SK-N-SH (cell line): ENCODE measurements at regions of chr5 and their contacts with region 1.

Region 1: GRCh38 chr5:139968547-139969261 is 74.4 kb downstream of the NRG2 start:
- DNase-seq: peak; percentile 91
- H3K4me3 ChIP-seq: peak overlapping the region in 1 of 2 experiments; percentile 28; a peak in 1 of 4 replicates
- H3K27ac ChIP-seq: no peak overlapping the region
- H3K4me1 ChIP-seq: peaks cover 0 to 16% of the 10 kb centered on the region in 2 experiments; a peak in 1 of 4 replicates
- H3K27me3 ChIP-seq: no peaks in the 10 kb centered on the region
- CTCF ChIP-seq: peak; percentile 97
- EP300 ChIP-seq: no peak
- RAD21 ChIP-seq: peak; percentile 99

Region 2: DNA sequence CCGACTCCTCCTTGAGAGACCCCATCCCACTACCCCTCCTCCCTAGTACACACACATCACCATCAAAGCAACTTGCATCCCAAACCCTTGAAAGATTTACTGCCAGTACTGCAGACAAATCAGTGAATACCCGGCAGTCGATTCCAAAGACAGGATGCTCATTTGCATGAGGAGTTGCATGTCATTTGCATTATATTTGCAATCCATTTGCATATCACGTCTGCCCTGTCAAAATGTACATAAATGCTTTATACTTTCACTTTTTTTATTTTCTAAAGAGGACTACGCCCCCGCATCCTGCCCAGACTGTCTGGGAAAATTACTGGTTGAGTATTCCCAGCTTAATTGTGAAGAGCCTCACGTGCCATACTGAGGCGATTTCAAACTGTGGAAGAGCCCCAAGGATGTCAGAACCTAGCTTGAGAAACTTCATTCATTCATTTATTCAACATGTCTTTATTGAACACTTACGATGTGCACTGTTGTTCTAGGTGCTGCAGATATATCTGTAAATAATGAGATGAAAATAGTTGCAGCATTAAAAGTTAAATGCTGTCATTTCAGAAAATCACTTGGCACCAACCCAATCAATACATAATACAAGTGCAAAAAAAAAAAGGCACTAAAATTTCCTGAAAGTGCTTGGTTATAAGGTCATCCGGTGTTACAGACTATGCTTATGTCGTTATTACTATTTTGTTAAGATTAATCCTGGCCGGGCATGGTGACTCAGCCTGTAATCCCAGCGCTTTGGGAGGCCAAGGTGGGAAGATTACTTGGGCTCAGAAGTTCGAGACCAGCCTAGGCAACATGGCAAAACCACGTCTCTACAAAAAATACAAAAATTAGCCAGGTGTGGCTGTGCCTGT is 753.4 kb before region 1 on chr5:
- CTCF ChIA-PET with region 1: no interaction called
- POLR2A ChIA-PET with region 1: no interaction called
- DNase-seq: no peak
- H3K4me3 ChIP-seq: no peak overlapping the region
- H3K27ac ChIP-seq: no peak overlapping the region
- H3K4me1 ChIP-seq: no peaks in the 10 kb centered on the region; a peak in 1 of 4 replicates
- H3K27me3 ChIP-seq: no peaks in the 10 kb centered on the region
- CTCF ChIP-seq: no peak
- EP300 ChIP-seq: no peak
- RAD21 ChIP-seq: no peak

Region 3: DNA sequence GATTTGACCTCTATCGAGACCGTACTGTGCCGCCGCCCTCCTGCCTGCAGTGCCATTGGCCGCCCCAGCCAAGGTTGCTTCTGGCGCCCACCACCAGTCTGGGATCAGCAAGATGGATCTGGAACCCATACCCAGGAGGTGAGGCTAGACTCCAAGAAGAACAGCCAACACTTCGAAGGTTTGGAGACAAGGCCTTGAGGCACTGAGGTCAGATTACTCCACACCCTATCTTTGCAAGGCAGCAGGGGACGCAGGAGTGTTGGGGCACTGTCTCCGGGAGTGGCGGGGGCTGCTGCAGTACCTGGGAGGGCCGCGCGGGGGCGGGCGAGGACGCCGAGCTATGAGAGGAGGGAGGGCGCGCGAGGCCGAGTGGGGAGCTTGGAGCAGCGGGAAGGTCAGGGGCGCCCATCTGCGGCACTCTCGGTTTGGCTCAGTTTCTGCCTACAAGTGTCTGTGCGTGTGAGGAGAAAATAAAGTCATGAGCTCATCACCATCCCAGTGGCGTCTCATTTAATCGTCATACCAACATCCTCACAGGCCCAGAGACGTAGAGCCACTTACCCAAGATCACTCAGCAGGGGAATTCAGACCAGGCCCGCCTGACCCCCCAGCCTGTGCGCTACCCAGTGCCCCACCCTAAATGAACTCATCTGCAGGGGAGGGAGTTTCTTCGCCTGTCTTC is 193.6 kb before region 1 on chr5:
- CTCF ChIA-PET with region 1: interaction called, 96 read pairs
- POLR2A ChIA-PET with region 1: interaction called, 3 read pairs
- DNase-seq: peak; percentile 94
- H3K4me3 ChIP-seq: peak overlapping the region in 1 of 2 experiments; percentile 4; a peak in 1 of 4 replicates
- H3K27ac ChIP-seq: no peak overlapping the region
- H3K4me1 ChIP-seq: peaks cover 0 to 2% of the 10 kb centered on the region in 2 experiments; a peak in 1 of 4 replicates
- H3K27me3 ChIP-seq: no peaks in the 10 kb centered on the region; the same call in 1 of the 2 replicates
- CTCF ChIP-seq: peak; percentile 86
- EP300 ChIP-seq: no peak
- RAD21 ChIP-seq: peak; percentile 53

Region 4: GRCh38 chr5:139844472-139845145 is 124.1 kb before region 1 on chr5:
- CTCF ChIA-PET with region 1: interaction called, 67 read pairs
- POLR2A ChIA-PET with region 1: interaction called, 3 read pairs
- DNase-seq: peak; percentile 81
- H3K4me3 ChIP-seq: no peak overlapping the region; a peak in 1 of 4 replicates
- H3K27ac ChIP-seq: no peak overlapping the region
- H3K4me1 ChIP-seq: peaks cover 0 to 2% of the 10 kb centered on the region in 2 experiments; a peak in 1 of 4 replicates
- H3K27me3 ChIP-seq: no peaks in the 10 kb centered on the region
- CTCF ChIP-seq: peak; percentile 84
- EP300 ChIP-seq: no peak
- RAD21 ChIP-seq: peak; percentile 74

Region 5: GRCh38 chr5:139895647-139896046 is 73.1 kb before region 1 on chr5:
- CTCF ChIA-PET with region 1: interaction called, 79 read pairs
- POLR2A ChIA-PET with region 1: no interaction called
- DNase-seq: no peak
- H3K4me3 ChIP-seq: no peak overlapping the region
- H3K27ac ChIP-seq: peak overlapping the region in 1 of 2 experiments; percentile 97; a peak in 2 of 4 replicates
- H3K4me1 ChIP-seq: peaks cover 0 to 65% of the 10 kb centered on the region in 2 experiments; a peak in 2 of 4 replicates
- H3K27me3 ChIP-seq: no peaks in the 10 kb centered on the region
- CTCF ChIP-seq: no peak
- EP300 ChIP-seq: peak in 1 of 2 experiments; percentile 38; a peak in 1 of 4 replicates
- RAD21 ChIP-seq: no peak

Region 6: GRCh38 chr5:139949710-139950109 is 19.0 kb before region 1 on chr5:
- CTCF ChIA-PET with region 1: interaction called, 73 read pairs
- POLR2A ChIA-PET with region 1: no interaction called
- DNase-seq: no peak
- H3K4me3 ChIP-seq: no peak overlapping the region
- H3K27ac ChIP-seq: no peak overlapping the region
- H3K4me1 ChIP-seq: peaks cover 0 to 24% of the 10 kb centered on the region in 2 experiments; a peak in 1 of 4 replicates
- H3K27me3 ChIP-seq: no peaks in the 10 kb centered on the region
- CTCF ChIP-seq: no peak
- EP300 ChIP-seq: no peak
- RAD21 ChIP-seq: no peak

Region 7: DNA sequence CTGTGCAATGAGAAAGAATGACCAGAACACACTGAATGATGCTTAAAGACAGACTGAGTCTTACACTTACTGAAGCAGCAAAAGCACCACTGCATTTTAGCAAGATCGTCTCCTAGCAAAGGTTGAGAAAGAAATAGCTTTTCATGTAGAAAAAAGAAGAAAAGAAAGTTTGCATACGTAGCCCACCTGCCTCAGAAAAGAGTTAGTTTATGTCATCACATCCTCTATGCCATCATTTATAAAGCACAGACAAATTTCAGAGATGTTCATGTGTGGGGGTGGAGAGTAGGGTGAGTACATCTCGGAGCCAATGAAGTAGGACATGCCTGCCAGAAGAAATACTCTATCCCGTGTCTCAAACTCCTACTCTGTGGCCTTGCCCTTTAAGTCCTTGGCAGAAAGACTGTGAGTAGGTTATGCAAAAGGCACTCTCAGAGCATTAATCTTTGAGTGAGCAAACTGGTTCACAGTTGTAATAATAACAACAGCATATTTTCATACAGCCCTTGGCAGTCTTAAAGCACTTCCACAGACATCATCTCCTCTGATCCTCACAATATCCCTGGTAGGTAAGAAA is 52.0 kb after region 1 on chr5:
- CTCF ChIA-PET with region 1: interaction called, 10 read pairs
- POLR2A ChIA-PET with region 1: no interaction called
- DNase-seq: no peak
- H3K4me3 ChIP-seq: no peak overlapping the region
- H3K27ac ChIP-seq: no peak overlapping the region
- H3K4me1 ChIP-seq: peaks cover 0 to 10% of the 10 kb centered on the region in 2 experiments; a peak in 1 of 4 replicates
- H3K27me3 ChIP-seq: no peaks in the 10 kb centered on the region
- CTCF ChIP-seq: no peak
- EP300 ChIP-seq: no peak
- RAD21 ChIP-seq: no peak

Region 8: GRCh38 chr5:140564196-140565023 is 595.7 kb after region 1 on chr5 and contains the starts of genes APBB3 and SLC35A4:
- CTCF ChIA-PET with region 1: no interaction called
- POLR2A ChIA-PET with region 1: no interaction called
- DNase-seq: peak; percentile 96
- H3K4me3 ChIP-seq: peak within 1 kb of the TSS; percentile 85 to 97
- H3K27ac ChIP-seq: peak within 1 kb of the TSS; percentile 90 to 94
- H3K4me1 ChIP-seq: peaks cover 3 to 20% of the 10 kb centered on the region in 2 experiments; a peak in 1 of 4 replicates
- H3K27me3 ChIP-seq: no peaks in the 10 kb centered on the region
- CTCF ChIP-seq: no peak
- EP300 ChIP-seq: no peak; a peak in 1 of 4 replicates
- RAD21 ChIP-seq: no peak
- polyA plus RNA-seq, gene APBB3: 36.0 and 54.5 TPM in 2 replicates
- polyA plus RNA-seq, gene SLC35A4: 56.2 and 74.9 TPM in 2 replicates